Gastrocnemius medialis (tissue), 4 donors: ENCODE measurements at regions of chr17 and their contacts with region 1.

Region 1: DNA sequence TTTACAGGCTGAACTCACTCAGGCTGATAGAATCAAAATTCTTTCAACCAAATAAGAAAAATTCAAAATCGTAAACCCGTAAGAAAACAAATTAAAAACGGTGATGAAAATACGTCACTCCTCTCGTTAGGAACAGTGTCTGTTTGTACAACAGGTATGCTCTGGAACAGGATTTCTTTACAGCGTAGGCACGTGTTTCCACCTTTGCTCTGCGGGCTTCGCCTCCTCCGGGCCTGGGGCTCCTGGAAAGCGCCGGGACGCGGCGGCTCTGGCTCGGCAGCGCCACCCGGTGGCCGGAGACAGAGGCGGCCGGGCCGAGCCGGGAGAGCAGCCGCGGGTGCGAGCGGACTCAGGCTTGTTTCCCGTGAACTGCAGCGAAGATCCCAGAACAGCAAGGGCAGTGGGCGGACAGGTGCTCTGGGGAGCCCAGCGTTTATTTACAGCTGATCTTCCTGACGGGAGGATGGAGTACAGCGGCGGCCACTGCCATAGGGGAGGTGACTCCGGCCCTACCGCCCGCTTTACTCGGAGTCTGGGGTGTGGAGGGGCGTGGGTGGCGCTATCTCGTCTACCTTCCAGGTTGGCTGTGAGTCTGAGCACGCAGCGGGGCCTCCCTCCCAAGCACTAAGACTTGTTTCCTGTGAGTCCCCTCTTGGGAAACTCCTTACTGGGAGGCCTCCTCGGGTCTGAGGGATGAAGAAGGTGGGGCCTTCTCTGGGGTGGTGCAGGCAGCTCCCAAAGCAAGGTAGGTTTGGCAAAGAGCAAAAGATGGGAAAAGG is 40.5 kb upstream of the ATP2A3 start:
- DNase-seq: no peak
- ATAC-seq: peak in 1 of 2 donors; percentile 49
- H3K4me3 ChIP-seq: no peak overlapping the region
- H3K27ac ChIP-seq: no peak overlapping the region
- H3K4me1 ChIP-seq: peaks cover 0 to 5% of the 10 kb centered on the region in 2 donors
- H3K27me3 ChIP-seq: peaks cover 0 to 10% (median 0%) of the 10 kb centered on the region in 3 donors
- CTCF ChIP-seq: peak; percentile 78 to 94 (median 89)
- POLR2A ChIP-seq: no peak

Region 2: GRCh38 chr17:3913531-3914311 is 91.0 kb before region 1 on chr17:
- in situ Hi-C with region 1: loop called in 2 of 4 experiments (anchors 10 kb)
- intact Hi-C with region 1: loop called (anchors 5 kb)
- DNase-seq: peak in 1 of 2 donors; percentile 51
- ATAC-seq: peak; percentile 50 to 79
- H3K4me3 ChIP-seq: no peak overlapping the region
- H3K27ac ChIP-seq: no peak overlapping the region
- H3K4me1 ChIP-seq: peaks cover 3 to 9% of the 10 kb centered on the region in 2 donors
- H3K27me3 ChIP-seq: no peaks in the 10 kb centered on the region
- CTCF ChIP-seq: peak; percentile 87 to 98 (median 95)
- POLR2A ChIP-seq: no peak

Region 3: GRCh38 chr17:3935140-3935542 is 69.6 kb before region 1 on chr17:
- in situ Hi-C with region 1: no loop called
- intact Hi-C with region 1: loop called (anchors 1 kb)
- DNase-seq: peak in 1 of 2 donors; percentile 53
- ATAC-seq: peak; percentile 72
- H3K4me3 ChIP-seq: no peak overlapping the region
- H3K27ac ChIP-seq: no peak overlapping the region
- H3K4me1 ChIP-seq: no peaks in the 10 kb centered on the region
- H3K27me3 ChIP-seq: no peaks in the 10 kb centered on the region
- CTCF ChIP-seq: peak; percentile 12 to 70 (median 63)
- POLR2A ChIP-seq: no peak

Region 4: DNA sequence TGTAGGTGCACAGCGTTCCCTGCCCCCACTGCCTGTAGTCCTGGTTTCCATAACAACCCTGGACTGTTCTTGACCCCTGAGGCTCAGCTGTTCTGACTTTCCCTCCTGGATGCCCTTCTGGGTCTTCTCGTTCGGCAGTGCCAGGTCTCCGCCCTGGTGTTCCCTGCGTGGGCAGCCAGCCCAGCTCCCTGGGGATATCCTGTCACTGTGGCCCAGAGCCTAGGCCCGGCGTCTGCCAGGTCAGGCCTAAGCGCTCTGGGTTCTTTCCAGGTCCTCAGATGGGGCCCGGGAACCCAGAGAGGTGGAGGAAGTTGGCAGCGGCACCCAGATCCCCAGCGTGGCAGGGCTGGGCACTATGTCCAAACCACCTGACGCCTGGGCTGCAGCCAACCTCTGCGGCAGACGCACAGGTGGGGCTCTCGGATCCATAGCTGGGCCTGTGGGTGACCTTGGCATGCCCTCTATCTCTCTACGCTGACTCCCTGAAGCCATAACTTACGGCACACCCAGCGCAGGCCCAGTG is 28.0 kb before region 1 on chr17:
- in situ Hi-C with region 1: no loop called
- intact Hi-C with region 1: loop called (anchors 1 kb)
- DNase-seq: peak; percentile 48 to 91
- ATAC-seq: peak; percentile 69 to 84
- H3K4me3 ChIP-seq: no peak overlapping the region
- H3K27ac ChIP-seq: peak overlapping the region; percentile 64 to 79 (median 74)
- H3K4me1 ChIP-seq: peaks cover 7 to 13% of the 10 kb centered on the region in 2 donors
- H3K27me3 ChIP-seq: no peaks in the 10 kb centered on the region
- CTCF ChIP-seq: no peak
- POLR2A ChIP-seq: no peak

Region 5: GRCh38 chr17:4064366-4064765 is 59.7 kb after region 1 on chr17:
- in situ Hi-C with region 1: no loop called
- intact Hi-C with region 1: no loop called
- DNase-seq: no peak
- ATAC-seq: no peak
- H3K4me3 ChIP-seq: no peak overlapping the region
- H3K27ac ChIP-seq: no peak overlapping the region
- H3K4me1 ChIP-seq: no peaks in the 10 kb centered on the region
- H3K27me3 ChIP-seq: no peaks in the 10 kb centered on the region
- CTCF ChIP-seq: no peak
- POLR2A ChIP-seq: no peak

Region 6: GRCh38 chr17:4074831-4075495 is 70.3 kb after region 1 on chr17:
- in situ Hi-C with region 1: no loop called
- intact Hi-C with region 1: loop called (anchors 5 kb)
- DNase-seq: no peak
- ATAC-seq: peak; percentile 17 to 42
- H3K4me3 ChIP-seq: no peak overlapping the region
- H3K27ac ChIP-seq: peak overlapping the region; percentile 83 to 97 (median 86)
- H3K4me1 ChIP-seq: peaks cover 26 to 31% of the 10 kb centered on the region in 2 donors
- H3K27me3 ChIP-seq: no peaks in the 10 kb centered on the region
- CTCF ChIP-seq: peak; percentile 27 to 80 (median 64)
- POLR2A ChIP-seq: no peak